SK-N-SH (cell line): ENCODE measurements at regions of chr1 and their contacts with region 1.

Region 1: DNA sequence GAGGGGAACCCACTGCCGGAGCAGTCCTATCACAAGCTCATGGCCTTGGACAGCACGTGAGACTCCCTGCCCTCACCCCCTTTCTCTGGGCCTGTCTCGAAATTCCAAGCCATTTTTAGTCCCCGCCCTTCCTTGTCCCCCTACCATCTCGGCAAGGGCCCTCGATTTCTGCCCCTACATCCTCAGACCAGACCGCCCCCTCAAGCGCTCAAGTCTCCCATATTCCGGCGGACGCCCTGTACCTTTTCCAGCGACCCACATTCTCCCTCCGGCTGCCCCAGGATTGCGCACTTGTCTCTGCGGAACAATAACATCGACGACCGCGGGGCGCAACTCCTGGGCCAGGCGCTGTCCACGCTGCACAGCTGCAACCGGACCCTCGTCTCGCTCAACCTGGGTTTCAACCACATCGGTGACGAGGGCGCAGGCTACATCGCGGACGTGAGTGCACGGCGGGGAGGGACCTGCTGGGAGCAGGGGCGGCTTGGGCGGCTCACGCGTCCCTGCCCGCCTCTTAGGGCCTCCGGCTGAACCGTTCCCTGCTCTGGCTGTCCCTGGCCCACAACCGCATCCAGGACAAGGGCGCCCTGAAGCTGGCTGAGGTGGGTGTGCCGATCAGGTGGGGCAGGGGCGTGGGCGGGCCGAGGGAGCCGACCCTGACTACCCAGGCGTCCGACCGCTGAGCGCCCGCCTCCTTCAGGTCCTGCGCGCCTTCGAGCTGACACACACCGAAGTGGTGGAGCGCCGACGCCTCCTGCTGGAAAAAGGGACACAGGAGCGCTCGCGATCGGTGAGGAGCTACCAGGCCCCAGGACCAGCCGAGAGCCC is 7.0 kb downstream of the LRRC71 start:
- DNase-seq: peak; percentile 91
- H3K4me3 ChIP-seq: peak overlapping the region; percentile 37 to 44; a peak in 3 of 4 replicates
- H3K27ac ChIP-seq: peak overlapping the region in 1 of 2 experiments; percentile 6; a peak in 1 of 4 replicates
- H3K4me1 ChIP-seq: peaks cover 5 to 25% of the 10 kb centered on the region in 2 experiments; a peak in 2 of 4 replicates
- H3K27me3 ChIP-seq: no peaks in the 10 kb centered on the region
- CTCF ChIP-seq: peak; percentile 84
- EP300 ChIP-seq: no peak
- RAD21 ChIP-seq: peak; percentile 94

Region 2: GRCh38 chr1:156773607-156774006 is 153.8 kb before region 1 on chr1:
- CTCF ChIA-PET with region 1: interaction called, 16 read pairs
- POLR2A ChIA-PET with region 1: no interaction called
- DNase-seq: no peak
- H3K4me3 ChIP-seq: no peak overlapping the region
- H3K27ac ChIP-seq: peak overlapping the region; percentile 29 to 93; a peak in 3 of 4 replicates
- H3K4me1 ChIP-seq: peaks cover 27 to 41% of the 10 kb centered on the region in 2 experiments; a peak in 3 of 4 replicates
- H3K27me3 ChIP-seq: no peaks in the 10 kb centered on the region
- CTCF ChIP-seq: peak; percentile 18; the same call in 1 of the 2 replicates
- EP300 ChIP-seq: no peak
- RAD21 ChIP-seq: no peak

Region 3: GRCh38 chr1:156804572-156805243 is 122.7 kb before region 1 on chr1:
- CTCF ChIA-PET with region 1: interaction called, 91 read pairs
- POLR2A ChIA-PET with region 1: no interaction called
- DNase-seq: peak; percentile 51
- H3K4me3 ChIP-seq: no peak overlapping the region
- H3K27ac ChIP-seq: peak overlapping the region; percentile 28 to 90; a peak in 3 of 4 replicates
- H3K4me1 ChIP-seq: peaks cover 24 to 76% of the 10 kb centered on the region in 2 experiments
- H3K27me3 ChIP-seq: no peaks in the 10 kb centered on the region
- CTCF ChIP-seq: no peak
- EP300 ChIP-seq: 0 out of 4 replicates have a peak, but pooled peaks of 1 of the 2 experiments have one; percentile 27
- RAD21 ChIP-seq: no peak

Region 4: DNA sequence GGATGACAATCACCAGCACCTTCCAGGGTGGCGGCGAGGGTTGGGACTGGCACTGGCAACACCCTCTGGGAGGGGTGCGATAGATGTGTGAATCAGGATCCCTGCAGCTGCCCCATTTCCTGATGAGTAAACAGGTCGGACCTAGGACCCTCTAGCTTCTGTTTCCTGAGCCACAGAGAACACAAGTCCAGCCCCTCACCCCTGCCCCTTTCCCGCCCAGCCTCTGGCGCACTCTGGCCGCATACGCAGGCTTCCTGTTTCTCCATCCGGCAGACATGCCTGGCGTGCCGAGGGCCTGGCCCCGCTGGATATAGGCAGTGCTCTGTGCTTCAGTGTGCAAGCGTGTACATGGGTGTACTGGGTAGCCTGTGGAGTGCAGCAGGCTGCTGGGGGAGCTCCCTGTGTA is 29.3 kb before region 1 on chr1:
- CTCF ChIA-PET with region 1: interaction called, 308 read pairs
- POLR2A ChIA-PET with region 1: interaction called, 3 read pairs
- DNase-seq: peak; percentile 75
- H3K4me3 ChIP-seq: no peak overlapping the region
- H3K27ac ChIP-seq: peak overlapping the region; percentile 87 to 96
- H3K4me1 ChIP-seq: peaks cover 40 to 68% of the 10 kb centered on the region in 2 experiments; a peak in 3 of 4 replicates
- H3K27me3 ChIP-seq: no peaks in the 10 kb centered on the region
- CTCF ChIP-seq: no peak
- EP300 ChIP-seq: no peak
- RAD21 ChIP-seq: no peak

Region 5: GRCh38 chr1:156910309-156910782 is 17.1 kb before region 1 on chr1:
- CTCF ChIA-PET with region 1: interaction called, 182 read pairs
- POLR2A ChIA-PET with region 1: interaction called, 15 read pairs
- DNase-seq: peak; percentile 88
- H3K4me3 ChIP-seq: no peak overlapping the region; a peak in 1 of 4 replicates
- H3K27ac ChIP-seq: no peak overlapping the region
- H3K4me1 ChIP-seq: peaks cover 11 to 39% of the 10 kb centered on the region in 2 experiments; a peak in 3 of 4 replicates
- H3K27me3 ChIP-seq: no peaks in the 10 kb centered on the region
- CTCF ChIP-seq: peak; percentile 80
- EP300 ChIP-seq: no peak
- RAD21 ChIP-seq: peak; percentile 40

Region 6: DNA sequence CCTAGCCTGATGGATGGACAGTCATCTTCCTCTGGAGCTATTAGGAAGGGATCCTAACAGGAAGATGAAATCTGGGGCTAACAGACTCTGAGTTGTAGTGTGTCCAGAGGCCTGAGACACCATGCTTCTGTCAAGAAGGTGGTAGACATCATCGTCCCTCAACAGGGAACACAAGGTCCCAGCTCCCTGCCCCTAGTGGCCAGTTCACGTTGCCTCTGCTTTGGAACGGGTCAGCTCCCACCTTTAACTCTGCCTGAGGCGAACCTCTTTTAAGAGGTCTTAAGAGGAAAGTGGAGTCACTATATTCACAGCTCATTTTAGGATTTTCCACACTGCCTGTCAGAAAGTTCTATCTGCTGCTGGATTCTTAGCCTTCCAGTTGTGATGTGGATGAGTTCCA is 21.3 kb after region 1 on chr1:
- CTCF ChIA-PET with region 1: interaction called, 26 read pairs
- POLR2A ChIA-PET with region 1: no interaction called
- DNase-seq: no peak
- H3K4me3 ChIP-seq: no peak overlapping the region
- H3K27ac ChIP-seq: no peak overlapping the region
- H3K4me1 ChIP-seq: no peaks in the 10 kb centered on the region
- H3K27me3 ChIP-seq: no peaks in the 10 kb centered on the region
- CTCF ChIP-seq: peak; percentile 34; the same call in 1 of the 2 replicates
- EP300 ChIP-seq: no peak
- RAD21 ChIP-seq: no peak